CD4-positive, alpha-beta T cell (primary cell): ENCODE measurements at regions of chr18 and their contacts with region 1.

Region 1: GRCh38 chr18:23918401-23919032 is 96.0 kb upstream of the TTC39C start:
- DNase-seq: peak; percentile 67 to 90 (median 78)
- ATAC-seq: peak; percentile 84
- H3K4me3 ChIP-seq: no peak overlapping the region
- H3K4me3 Mint-ChIP-seq: no peak overlapping the region
- H3K27ac ChIP-seq: no peak overlapping the region
- H3K27ac Mint-ChIP-seq: no peak overlapping the region
- H3K4me1 ChIP-seq: peaks cover 29% of the 10 kb centered on the region
- H3K4me1 Mint-ChIP-seq: peaks cover 23% of the 10 kb centered on the region
- H3K27me3 ChIP-seq: no peaks in the 10 kb centered on the region
- H3K27me3 Mint-ChIP-seq: no peaks in the 10 kb centered on the region
- CTCF ChIP-seq: peak; percentile 93

Region 2: DNA sequence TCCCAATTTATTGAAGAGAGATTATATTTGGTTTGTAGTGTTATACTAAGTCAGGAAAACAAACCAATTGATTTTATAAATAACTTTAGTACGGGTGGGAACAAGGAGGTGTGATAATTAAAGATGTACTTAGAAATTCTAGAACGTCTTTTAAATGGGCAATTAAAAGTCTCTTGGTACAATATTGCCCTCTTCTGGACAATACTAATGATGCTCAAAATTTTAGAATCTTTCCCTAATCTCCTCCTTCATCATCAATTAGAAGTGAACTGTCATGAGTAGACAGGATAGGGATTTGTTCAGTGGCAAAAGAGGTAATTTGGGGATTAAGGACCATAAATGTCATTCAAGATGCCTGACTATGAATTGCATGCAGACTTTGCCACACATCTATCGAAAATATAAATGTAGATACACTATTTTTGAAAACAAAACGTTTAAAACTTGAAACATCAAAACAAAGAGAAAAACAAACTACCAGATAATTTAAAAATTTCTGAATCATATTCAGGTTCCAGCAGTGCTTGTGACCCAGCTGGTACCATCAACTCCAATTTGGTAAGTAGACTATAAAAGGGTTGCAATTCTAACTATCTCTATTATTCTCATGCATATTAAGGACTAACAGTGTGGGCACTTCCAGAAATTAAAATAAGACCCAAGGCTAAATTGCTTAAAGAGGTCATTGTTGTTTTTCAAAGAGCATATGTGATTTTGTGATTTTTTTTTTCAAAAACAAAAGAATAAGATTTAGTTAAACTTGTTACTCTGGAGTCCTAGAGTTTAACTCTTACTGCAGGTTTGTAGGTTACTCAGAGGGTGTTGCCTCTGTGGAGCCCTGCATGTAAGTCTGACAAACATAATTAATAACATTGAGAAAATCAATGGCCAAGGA is 105.7 kb before region 1 on chr18:
- CTCF ChIA-PET with region 1: interaction called, 3 read pairs
- POLR2A ChIA-PET with region 1: no interaction called
- intact Hi-C with region 1: loop called in 1 of 2 experiments (anchors 5 kb)
- DNase-seq: peak in 3 of 14 experiments; percentile 47 to 57 (median 49)
- ATAC-seq: peak; percentile 49
- H3K4me3 ChIP-seq: no peak overlapping the region
- H3K4me3 Mint-ChIP-seq: no peak overlapping the region
- H3K27ac ChIP-seq: no peak overlapping the region
- H3K27ac Mint-ChIP-seq: no peak overlapping the region
- H3K4me1 ChIP-seq: peaks cover 9% of the 10 kb centered on the region
- H3K4me1 Mint-ChIP-seq: peaks cover 11% of the 10 kb centered on the region
- H3K27me3 ChIP-seq: no peaks in the 10 kb centered on the region
- H3K27me3 Mint-ChIP-seq: no peaks in the 10 kb centered on the region
- CTCF ChIP-seq: peak; percentile 63

Region 3: GRCh38 chr18:23871410-23871809 is 47.1 kb before region 1 on chr18:
- CTCF ChIA-PET with region 1: interaction called, 6 read pairs
- POLR2A ChIA-PET with region 1: no interaction called
- intact Hi-C with region 1: loop called in 1 of 2 experiments (anchors 1 kb)
- DNase-seq: peak; percentile 54 to 90 (median 72)
- ATAC-seq: peak; percentile 94
- H3K4me3 ChIP-seq: no peak overlapping the region
- H3K4me3 Mint-ChIP-seq: peak overlapping the region; percentile 73
- H3K27ac ChIP-seq: peak overlapping the region in 1 of 2 donors; percentile 9
- H3K27ac Mint-ChIP-seq: peak overlapping the region; percentile 93
- H3K4me1 ChIP-seq: peaks cover 35% of the 10 kb centered on the region
- H3K4me1 Mint-ChIP-seq: peaks cover 55% of the 10 kb centered on the region
- H3K27me3 ChIP-seq: no peaks in the 10 kb centered on the region
- H3K27me3 Mint-ChIP-seq: no peaks in the 10 kb centered on the region
- CTCF ChIP-seq: no peak

Region 4: GRCh38 chr18:24075731-24076130 is 157.2 kb after region 1 on chr18:
- CTCF ChIA-PET with region 1: interaction called, 13 read pairs
- POLR2A ChIA-PET with region 1: no interaction called
- intact Hi-C with region 1: no loop called
- DNase-seq: no peak
- ATAC-seq: no peak
- H3K4me3 ChIP-seq: no peak overlapping the region
- H3K4me3 Mint-ChIP-seq: no peak overlapping the region
- H3K27ac ChIP-seq: peak overlapping the region in 1 of 2 donors; percentile 20
- H3K27ac Mint-ChIP-seq: peak overlapping the region; percentile 71
- H3K4me1 ChIP-seq: peaks cover 17% of the 10 kb centered on the region
- H3K4me1 Mint-ChIP-seq: peaks cover 67% of the 10 kb centered on the region
- H3K27me3 ChIP-seq: no peaks in the 10 kb centered on the region
- H3K27me3 Mint-ChIP-seq: no peaks in the 10 kb centered on the region
- CTCF ChIP-seq: no peak